ENCODE measurements at regions of chr5 and their contacts with region 1.

Region 1: GRCh38 chr5:1641560-1642166 is 117.9 kb upstream of the LPCAT1 start:
- DNase-seq: peak; percentile 93
- H3K4me3 Mint-ChIP-seq: no peak overlapping the region
- H3K27ac Mint-ChIP-seq: no peak overlapping the region
- H3K4me1 Mint-ChIP-seq: peaks cover 8% of the 10 kb centered on the region
- H3K27me3 Mint-ChIP-seq: peaks cover 37% of the 10 kb centered on the region

Region 2: GRCh38 chr5:1161833-1162229 is 479.8 kb before region 1 on chr5:
- intact Hi-C with region 1: no loop called
- DNase-seq: no peak
- H3K4me3 Mint-ChIP-seq: no peak overlapping the region
- H3K27ac Mint-ChIP-seq: no peak overlapping the region
- H3K4me1 Mint-ChIP-seq: no peaks in the 10 kb centered on the region
- H3K27me3 Mint-ChIP-seq: peaks cover 13% of the 10 kb centered on the region

Region 3: DNA sequence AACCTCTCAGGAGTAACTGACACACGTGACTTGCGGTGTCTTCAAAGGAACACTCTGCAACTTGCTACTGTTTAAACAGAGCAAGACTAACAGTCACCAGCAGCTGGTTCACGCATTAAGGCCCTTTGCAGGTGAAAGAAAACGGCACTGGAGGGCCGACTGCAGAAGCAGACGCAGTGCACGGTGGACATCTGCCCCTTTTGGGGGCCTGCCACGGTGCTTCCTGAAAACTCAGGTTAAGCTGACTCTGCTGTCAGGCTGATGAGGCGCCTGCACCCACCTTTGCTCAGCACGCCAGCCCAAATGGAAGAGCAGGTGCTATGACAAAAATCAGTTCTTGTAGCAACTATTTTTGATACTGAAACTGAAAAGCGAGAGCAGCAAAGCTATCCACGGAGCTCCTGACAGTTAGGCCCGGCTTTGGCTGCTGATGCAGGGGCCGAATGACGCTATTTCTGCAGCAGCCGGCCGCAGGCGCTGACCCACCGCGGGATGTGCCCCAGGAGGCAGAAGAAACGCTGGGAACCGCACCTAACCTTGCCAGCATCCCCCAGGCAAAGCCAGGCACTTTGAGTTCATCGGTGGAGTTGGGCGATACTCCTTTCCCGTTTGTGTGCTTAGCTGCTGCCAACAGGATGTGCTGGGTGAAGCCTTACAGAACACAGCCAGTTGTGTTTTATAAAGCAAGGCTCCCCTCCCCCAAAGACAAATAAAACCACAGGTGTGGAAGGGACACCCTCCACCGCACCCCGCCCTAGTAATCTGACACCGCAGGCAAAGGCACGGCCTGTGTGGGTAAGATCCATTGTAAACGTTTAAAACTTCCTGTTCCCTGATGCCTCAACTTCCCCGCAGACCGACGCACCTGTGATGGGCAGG is 325.7 kb before region 1 on chr5:
- intact Hi-C with region 1: loop called (anchors 10 kb)
- DNase-seq: peak; percentile 90
- H3K4me3 Mint-ChIP-seq: peak overlapping the region; percentile 74
- H3K27ac Mint-ChIP-seq: peak overlapping the region; percentile 85
- H3K4me1 Mint-ChIP-seq: peaks cover 57% of the 10 kb centered on the region
- H3K27me3 Mint-ChIP-seq: no peaks in the 10 kb centered on the region

Region 4: GRCh38 chr5:1479581-1480188 is 162.0 kb before region 1 on chr5:
- intact Hi-C with region 1: loop called (anchors 1 kb)
- DNase-seq: peak; percentile 76
- H3K4me3 Mint-ChIP-seq: no peak overlapping the region
- H3K27ac Mint-ChIP-seq: no peak overlapping the region
- H3K4me1 Mint-ChIP-seq: no peaks in the 10 kb centered on the region
- H3K27me3 Mint-ChIP-seq: no peaks in the 10 kb centered on the region

Region 5: GRCh38 chr5:1536322-1536845 is 105.3 kb before region 1 on chr5:
- intact Hi-C with region 1: loop called (anchors 5 kb)
- DNase-seq: peak; percentile 87
- H3K4me3 Mint-ChIP-seq: peak overlapping the region; percentile 83
- H3K27ac Mint-ChIP-seq: peak overlapping the region; percentile 71
- H3K4me1 Mint-ChIP-seq: peaks cover 17% of the 10 kb centered on the region
- H3K27me3 Mint-ChIP-seq: peaks cover 28% of the 10 kb centered on the region